Activated T-helper 1 cell treated with anti-CD3 and anti-CD28 coated beads, Interleukin-12 subunit alpha, Interleukin-12 subunit beta, Interleukin-2, Interleukin-4 antibody, amounts not matched to agents 30 ng/mL and 10 ng/mL and 1 ng/mL, durations not matched to agents 14 hours and 24 hours and 36 hours (primary cell): ENCODE measurements at regions of chr13 and their contacts with region 1.

Region 1: GRCh38 chr13:24228852-24229458 is 68.4 kb downstream of the SPATA13 start:
- DNase-seq: no peak
- H3K4me3 Mint-ChIP-seq: no peak overlapping the region
- H3K27ac Mint-ChIP-seq: peak overlapping the region; percentile 40
- H3K4me1 Mint-ChIP-seq: peaks cover 56% of the 10 kb centered on the region
- H3K27me3 Mint-ChIP-seq: no peaks in the 10 kb centered on the region

Region 2: GRCh38 chr13:23794267-23795161 is 434.4 kb before region 1 on chr13:
- intact Hi-C with region 1: no loop called
- DNase-seq: no peak
- H3K4me3 Mint-ChIP-seq: no peak overlapping the region
- H3K27ac Mint-ChIP-seq: no peak overlapping the region
- H3K4me1 Mint-ChIP-seq: peaks cover under 1% of the 10 kb centered on the region
- H3K27me3 Mint-ChIP-seq: no peaks in the 10 kb centered on the region

Region 3: GRCh38 chr13:23966691-23967615 is 262.0 kb before region 1 on chr13:
- intact Hi-C with region 1: loop called (anchors 1 kb)
- DNase-seq: peak; percentile 40
- H3K4me3 Mint-ChIP-seq: peak overlapping the region; percentile 77
- H3K27ac Mint-ChIP-seq: peak overlapping the region; percentile 86
- H3K4me1 Mint-ChIP-seq: peaks cover 47% of the 10 kb centered on the region
- H3K27me3 Mint-ChIP-seq: no peaks in the 10 kb centered on the region

Region 4: GRCh38 chr13:24005755-24006281 is 223.1 kb before region 1 on chr13:
- intact Hi-C with region 1: no loop called
- DNase-seq: no peak
- H3K4me3 Mint-ChIP-seq: no peak overlapping the region
- H3K27ac Mint-ChIP-seq: no peak overlapping the region
- H3K4me1 Mint-ChIP-seq: no peaks in the 10 kb centered on the region
- H3K27me3 Mint-ChIP-seq: peaks cover 22% of the 10 kb centered on the region

Region 5: DNA sequence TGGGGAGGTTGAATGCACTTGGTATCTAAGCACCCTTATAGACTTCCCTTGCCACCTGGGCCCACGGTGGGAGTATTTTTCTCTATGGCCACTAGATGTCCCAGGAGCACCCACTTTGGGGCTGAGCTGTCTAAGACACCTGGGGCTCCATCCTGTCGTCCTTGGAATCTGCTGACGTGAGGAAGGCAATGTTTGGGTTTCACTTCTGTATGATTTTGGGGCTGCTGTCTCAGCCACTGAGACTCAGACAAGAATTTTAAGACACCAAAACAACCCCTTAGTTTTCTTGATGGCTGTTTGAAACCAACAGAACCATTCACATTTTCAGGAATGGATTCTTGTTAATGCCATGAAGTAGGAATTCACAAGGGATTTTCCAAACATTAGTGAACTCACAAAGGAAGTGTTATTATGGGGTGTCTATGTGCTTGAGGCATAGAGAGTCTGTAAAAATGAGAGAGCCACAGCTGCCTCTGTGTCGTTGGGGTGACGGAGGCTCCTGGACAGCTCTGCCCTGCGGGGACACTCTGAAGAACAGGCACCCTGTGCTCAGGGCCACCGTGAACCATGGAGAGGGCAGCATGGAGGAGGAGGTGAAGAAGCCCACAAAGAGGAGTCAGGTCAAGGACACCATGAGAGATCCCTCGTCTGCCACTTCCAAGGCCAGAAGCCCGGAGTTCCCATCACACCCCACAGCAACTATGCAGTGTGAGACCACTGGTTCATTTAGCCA is 175.3 kb before region 1 on chr13:
- intact Hi-C with region 1: loop called (anchors 2 kb)
- DNase-seq: peak; percentile 55
- H3K4me3 Mint-ChIP-seq: no peak overlapping the region
- H3K27ac Mint-ChIP-seq: no peak overlapping the region
- H3K4me1 Mint-ChIP-seq: peaks cover 20% of the 10 kb centered on the region
- H3K27me3 Mint-ChIP-seq: peaks cover 15% of the 10 kb centered on the region

Region 6: GRCh38 chr13:24187185-24187584 is 41.8 kb before region 1 on chr13:
- intact Hi-C with region 1: loop called (anchors 2 kb)
- DNase-seq: peak; percentile 3
- H3K4me3 Mint-ChIP-seq: peak overlapping the region; percentile 42
- H3K27ac Mint-ChIP-seq: peak overlapping the region; percentile 86
- H3K4me1 Mint-ChIP-seq: peaks cover 63% of the 10 kb centered on the region
- H3K27me3 Mint-ChIP-seq: no peaks in the 10 kb centered on the region

Region 7: DNA sequence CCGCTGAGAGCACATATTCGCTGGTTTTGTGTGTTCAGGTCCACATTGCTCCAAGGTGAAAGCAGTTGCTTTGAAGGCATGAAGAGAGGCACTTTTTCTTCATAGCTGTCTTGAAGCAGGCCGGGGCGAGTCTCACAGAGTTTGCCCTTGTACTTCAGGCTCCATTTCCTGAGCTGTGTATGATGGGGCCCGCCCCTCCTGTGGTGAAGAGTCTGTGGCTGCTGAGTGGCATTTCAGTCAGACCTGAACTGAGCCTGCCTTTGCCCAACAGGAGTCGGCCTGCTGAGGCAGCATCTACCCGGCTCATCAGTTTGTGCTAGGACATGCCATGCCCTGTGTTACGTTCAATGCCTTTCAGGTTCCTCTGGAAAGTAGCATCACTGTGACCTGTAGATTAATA is 36.0 kb after region 1 on chr13:
- intact Hi-C with region 1: loop called (anchors 1 kb)
- DNase-seq: peak; percentile 76
- H3K4me3 Mint-ChIP-seq: peak overlapping the region; percentile 45
- H3K27ac Mint-ChIP-seq: peak overlapping the region; percentile 78
- H3K4me1 Mint-ChIP-seq: peaks cover 83% of the 10 kb centered on the region
- H3K27me3 Mint-ChIP-seq: no peaks in the 10 kb centered on the region

Region 8: GRCh38 chr13:24381539-24382265 is 152.7 kb after region 1 on chr13:
- intact Hi-C with region 1: no loop called
- DNase-seq: no peak
- H3K4me3 Mint-ChIP-seq: no peak overlapping the region
- H3K27ac Mint-ChIP-seq: no peak overlapping the region
- H3K4me1 Mint-ChIP-seq: peaks cover 10% of the 10 kb centered on the region
- H3K27me3 Mint-ChIP-seq: peaks cover 18% of the 10 kb centered on the region